Heart right ventricle (tissue), 16 donors: ENCODE measurements at regions of chr5 and their contacts with region 1.

Region 1: GRCh38 chr5:759111-759751 is 25.3 kb downstream of the ZDHHC11B start:
- DNase-seq: peak; percentile 77 to 89
- ATAC-seq: peak; percentile 70 to 89 (median 78)
- H3K4me3 ChIP-seq: peak overlapping the region in 7 of 10 donors; percentile 3 to 35 (median 25)
- H3K27ac ChIP-seq: peak overlapping the region in 9 of 10 donors; percentile 73 to 89 (median 83)
- H3K4me1 ChIP-seq: peaks cover 23 to 55% (median 38%) of the 10 kb centered on the region in 9 donors
- H3K27me3 ChIP-seq: no peaks in the 10 kb centered on the region
- CTCF ChIP-seq: peak in 1 of 9 donors; percentile 19

Region 2: DNA sequence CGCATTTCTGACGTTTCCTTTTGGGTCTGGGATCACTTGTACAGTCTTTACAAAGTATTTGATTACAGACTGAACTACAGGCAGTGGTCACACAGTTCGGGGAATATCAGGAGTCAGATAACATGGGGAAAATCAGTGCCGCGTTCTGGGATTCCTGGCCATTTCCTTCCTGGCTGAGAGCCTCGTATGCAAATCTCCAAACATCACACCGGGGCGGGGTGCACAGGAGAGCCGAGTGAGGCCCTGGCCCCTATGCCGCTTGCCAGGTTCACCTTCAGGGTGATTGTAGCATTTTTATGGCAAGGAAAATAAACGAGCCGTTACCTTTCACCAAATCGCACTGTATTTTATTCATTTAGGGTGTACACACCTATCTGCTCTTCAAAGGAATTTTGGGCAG is 205.3 kb before region 1 on chr5:
- intact Hi-C with region 1: no loop called
- DNase-seq: no peak
- ATAC-seq: no peak
- H3K4me3 ChIP-seq: no peak overlapping the region
- H3K27ac ChIP-seq: no peak overlapping the region
- H3K4me1 ChIP-seq: no peaks in the 10 kb centered on the region
- H3K27me3 ChIP-seq: peaks cover 0 to 34% (median 31%) of the 10 kb centered on the region in 7 donors
- CTCF ChIP-seq: no peak

Region 3: GRCh38 chr5:671459-672328 is 87.5 kb before region 1 on chr5:
- intact Hi-C with region 1: loop called in 2 of 10 experiments (anchors 5 kb)
- DNase-seq: peak; percentile 75 to 79
- ATAC-seq: peak; percentile 71 to 88 (median 80)
- H3K4me3 ChIP-seq: peak overlapping the region in 4 of 10 donors; percentile 8 to 40 (median 28)
- H3K27ac ChIP-seq: peak overlapping the region in 6 of 10 donors; percentile 29 to 76 (median 56)
- H3K4me1 ChIP-seq: peaks cover 25 to 45% (median 37%) of the 10 kb centered on the region in 9 donors
- H3K27me3 ChIP-seq: peaks cover 0 to 25% (median 0%) of the 10 kb centered on the region in 7 donors
- CTCF ChIP-seq: peak; percentile 88 to 98 (median 95)

Region 4: DNA sequence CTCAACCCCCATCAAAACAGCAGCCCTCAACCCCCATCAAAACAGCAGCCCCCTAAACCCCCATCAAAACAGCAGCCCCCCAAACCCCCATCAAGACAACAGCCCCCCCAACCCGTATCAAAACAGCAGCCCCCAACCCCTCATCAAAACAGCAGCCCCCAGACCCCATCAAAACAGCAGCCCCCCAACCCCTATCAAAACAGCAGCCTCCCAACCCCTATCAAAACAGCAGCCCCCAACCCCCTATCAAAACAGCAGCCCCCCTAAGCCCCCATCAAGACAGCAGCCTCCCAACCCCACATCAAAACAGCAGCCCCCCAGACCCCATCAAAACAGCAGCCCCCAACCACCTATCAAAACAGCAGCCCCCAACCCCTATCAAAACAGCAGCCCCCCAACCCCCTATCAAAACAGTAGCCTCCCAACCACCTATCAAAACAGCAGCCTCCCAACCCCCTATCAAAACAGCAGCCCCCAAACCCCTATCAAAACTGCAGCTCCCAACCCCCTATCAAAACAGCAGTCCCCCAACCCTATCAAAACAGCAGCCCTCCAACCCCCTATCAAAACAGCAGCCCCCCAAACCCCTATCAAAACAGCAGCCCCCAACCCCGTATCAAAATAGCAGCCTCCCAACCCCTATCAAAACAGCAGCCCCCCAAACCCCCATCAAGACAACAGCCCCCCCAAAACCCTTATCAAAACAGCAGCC is 67.3 kb before region 1 on chr5:
- intact Hi-C with region 1: loop called in 1 of 10 experiments (anchors 2 kb)
- DNase-seq: no peak
- ATAC-seq: no peak
- H3K4me3 ChIP-seq: peak overlapping the region; percentile 41 to 66 (median 60)
- H3K27ac ChIP-seq: no peak overlapping the region
- H3K4me1 ChIP-seq: peaks cover 0 to 6% (median 0%) of the 10 kb centered on the region in 9 donors
- H3K27me3 ChIP-seq: peaks cover 0 to 8% (median 0%) of the 10 kb centered on the region in 7 donors
- CTCF ChIP-seq: no peak

Region 5: DNA sequence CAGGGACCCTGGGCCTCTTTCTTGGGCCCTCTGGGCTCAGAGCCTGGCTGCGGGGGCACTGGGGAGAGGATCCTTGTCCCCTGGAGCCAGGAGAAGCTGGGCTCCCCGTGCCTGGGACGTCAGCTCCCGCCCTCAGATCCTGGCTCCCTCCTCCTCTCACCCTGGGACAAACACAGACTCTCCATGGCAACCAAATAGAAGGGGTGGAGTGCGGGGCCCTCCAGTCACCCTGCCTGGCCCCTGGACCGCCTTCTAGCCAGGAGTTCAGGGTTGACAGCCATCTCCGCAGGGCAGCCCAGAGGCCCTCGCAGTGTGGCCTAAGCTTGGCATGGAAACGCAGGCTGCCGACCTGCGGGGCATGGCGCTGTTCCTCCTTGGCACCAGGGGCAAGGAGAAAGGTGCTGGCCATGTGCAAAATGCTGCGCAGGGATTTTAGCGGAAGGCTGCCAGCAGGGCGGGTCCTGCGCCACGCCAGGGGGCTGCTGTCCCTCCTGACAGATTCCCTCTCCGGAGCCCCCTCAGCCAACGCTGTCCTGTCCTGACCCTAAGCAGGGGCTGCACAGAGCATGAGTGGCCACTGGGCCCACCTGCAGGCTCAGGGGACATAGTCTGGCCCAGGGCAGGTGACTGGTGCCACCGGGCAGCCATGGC is 90.5 kb after region 1 on chr5:
- intact Hi-C with region 1: loop called in 7 of 10 experiments (anchors 5 to 10 kb)
- DNase-seq: peak; percentile 44 to 47
- ATAC-seq: peak; percentile 49 to 92 (median 80)
- H3K4me3 ChIP-seq: peak overlapping the region in 9 of 10 donors; percentile 4 to 43 (median 31)
- H3K27ac ChIP-seq: peak overlapping the region in 6 of 10 donors; percentile 15 to 65 (median 46)
- H3K4me1 ChIP-seq: peaks cover 0 to 6% (median 0%) of the 10 kb centered on the region in 9 donors
- H3K27me3 ChIP-seq: peaks cover 0 to 20% (median 11%) of the 10 kb centered on the region in 7 donors
- CTCF ChIP-seq: no peak

Region 6: DNA sequence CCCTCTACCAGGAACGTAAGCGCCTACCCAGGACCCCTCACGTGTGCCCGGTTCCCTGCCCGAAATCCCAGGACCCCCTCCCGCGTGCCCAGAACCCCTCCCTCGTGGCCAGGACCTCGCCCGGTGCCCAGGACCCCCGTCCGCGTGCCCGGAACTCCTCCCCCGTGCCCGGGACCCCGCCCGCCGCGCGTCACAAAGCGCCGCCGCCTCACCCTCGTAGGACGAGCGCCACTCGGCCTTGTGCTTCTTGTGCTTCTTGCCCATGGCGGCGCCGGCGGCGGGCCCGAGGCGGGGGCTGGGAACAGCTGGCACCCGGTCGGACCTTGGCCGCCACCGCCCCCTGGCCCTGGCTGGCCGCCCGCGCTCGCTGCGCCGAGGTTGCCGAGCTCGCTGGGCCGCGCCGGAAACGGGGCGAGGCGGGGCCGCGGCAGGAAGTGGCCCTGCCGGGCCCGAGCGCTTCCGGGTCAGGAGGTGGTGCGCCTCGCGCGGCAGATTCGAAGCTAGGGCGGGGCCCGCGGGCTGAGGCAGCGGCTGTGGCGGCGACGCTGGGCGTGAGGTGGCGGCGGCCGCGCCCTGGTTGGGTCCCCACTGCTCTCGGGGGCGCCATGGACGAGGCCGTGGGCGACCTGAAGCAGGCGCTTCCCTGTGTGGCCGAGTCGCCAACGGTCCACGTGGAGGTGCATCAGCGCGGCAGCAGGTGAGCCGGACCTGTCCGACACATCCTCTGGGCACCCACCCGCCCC is 133.3 kb after region 1 on chr5 and contains the starts of genes BRD9 and TRIP13:
- intact Hi-C with region 1: loop called in 1 of 10 experiments (anchors 5 kb)
- DNase-seq: peak; percentile 77 to 86
- ATAC-seq: peak; percentile 92 to 97 (median 96)
- H3K4me3 ChIP-seq: peak within 1 kb of the TSS; percentile 57 to 92 (median 82)
- H3K27ac ChIP-seq: peak within 1 kb of the TSS; percentile 74 to 95 (median 93)
- H3K4me1 ChIP-seq: peaks cover 2 to 27% (median 21%) of the 10 kb centered on the region in 9 donors
- H3K27me3 ChIP-seq: no peaks in the 10 kb centered on the region
- CTCF ChIP-seq: peak in 3 of 9 donors; percentile 3 to 30 (median 29)
- total RNA-seq, gene BRD9: 21.4 to 42.6 (median 26.9) TPM
- total RNA-seq, gene TRIP13: 0.32 to 2.8 (median 1.2) TPM in 9 of 10 donors, not detected in the other